ENCODE measurements at regions of chr19 and their contacts with region 1.

Region 1: DNA sequence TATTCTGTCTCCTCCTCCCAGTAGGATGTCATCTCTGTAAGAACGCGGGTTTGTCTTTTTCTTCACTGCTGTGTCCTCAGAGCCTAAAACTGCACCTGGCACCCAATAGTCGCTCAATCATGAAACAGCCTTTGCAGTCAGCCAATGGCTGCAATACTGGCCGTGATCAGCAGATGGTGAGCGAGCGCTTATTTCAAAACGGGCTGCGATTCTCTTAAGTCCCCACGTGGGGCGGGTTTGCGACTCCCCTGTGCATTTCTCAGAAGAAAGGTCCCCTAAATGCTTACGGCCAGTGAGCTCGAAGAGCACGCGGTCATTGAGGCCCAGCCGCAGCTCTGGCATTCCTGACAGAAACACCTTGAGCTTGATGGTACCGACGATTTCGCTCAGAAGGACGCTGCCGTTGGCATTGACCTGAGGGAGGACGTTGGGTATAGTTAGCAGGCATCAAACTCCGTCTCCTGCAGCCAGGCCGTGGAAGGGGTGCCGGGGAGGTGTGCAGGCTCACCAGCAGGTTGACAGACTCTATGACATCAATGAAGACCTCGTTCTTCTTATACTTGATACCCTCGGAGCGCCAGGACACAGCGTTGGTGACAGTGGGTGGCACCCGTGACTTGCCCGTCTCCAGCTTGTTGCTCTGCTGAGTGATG is 6.0 kb downstream of the AP1M2 start:
- DNase-seq: peak; percentile 82
- CTCF ChIP-seq: peak; percentile 99

Region 2: DNA sequence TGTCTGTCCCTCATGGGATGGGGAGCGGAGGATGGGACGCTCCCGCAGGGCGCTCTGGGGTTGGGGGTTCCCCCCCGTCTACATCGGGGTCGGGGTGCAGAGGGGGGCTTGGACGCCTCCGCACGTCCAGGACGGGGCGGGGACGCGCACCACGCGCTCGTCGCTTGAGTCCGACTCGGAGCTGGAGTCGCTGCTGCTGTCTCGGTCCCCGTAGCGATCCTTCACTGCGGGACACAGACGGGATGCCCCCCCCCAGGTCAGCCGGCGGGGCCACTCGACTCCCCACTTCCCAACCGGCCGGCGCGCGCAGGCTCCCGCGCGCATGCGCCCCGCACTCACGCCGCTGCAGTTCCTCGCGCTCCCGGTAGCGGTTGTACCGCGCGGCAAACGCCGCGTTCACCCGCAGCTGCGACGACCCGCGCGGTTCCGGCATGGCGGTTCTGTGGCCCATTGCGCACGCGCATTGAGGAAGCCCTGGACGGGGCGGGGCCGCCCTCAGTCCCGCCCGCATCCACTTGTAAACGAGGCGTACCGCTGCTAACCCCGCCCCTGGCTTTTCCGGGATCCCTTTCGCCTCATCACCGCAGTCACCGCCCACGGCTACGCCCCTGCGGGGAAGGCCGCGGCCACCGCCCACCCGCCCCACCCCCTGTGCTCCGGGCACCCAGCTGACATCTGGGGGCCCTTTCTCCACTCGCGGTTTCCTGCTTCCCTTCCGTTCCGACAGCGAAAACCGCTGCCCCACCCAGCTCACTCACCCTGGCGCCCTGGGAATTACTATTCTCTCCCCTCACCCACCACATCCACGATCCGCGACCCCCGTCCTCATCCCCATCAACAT is 15.3 kb before region 1 on chr19 and contains the start of gene KRI1:
- CTCF ChIA-PET with region 1: interaction called, 46 read pairs
- POLR2A ChIA-PET with region 1: no interaction called
- DNase-seq: peak; percentile 98
- CTCF ChIP-seq: no peak

Region 3: DNA sequence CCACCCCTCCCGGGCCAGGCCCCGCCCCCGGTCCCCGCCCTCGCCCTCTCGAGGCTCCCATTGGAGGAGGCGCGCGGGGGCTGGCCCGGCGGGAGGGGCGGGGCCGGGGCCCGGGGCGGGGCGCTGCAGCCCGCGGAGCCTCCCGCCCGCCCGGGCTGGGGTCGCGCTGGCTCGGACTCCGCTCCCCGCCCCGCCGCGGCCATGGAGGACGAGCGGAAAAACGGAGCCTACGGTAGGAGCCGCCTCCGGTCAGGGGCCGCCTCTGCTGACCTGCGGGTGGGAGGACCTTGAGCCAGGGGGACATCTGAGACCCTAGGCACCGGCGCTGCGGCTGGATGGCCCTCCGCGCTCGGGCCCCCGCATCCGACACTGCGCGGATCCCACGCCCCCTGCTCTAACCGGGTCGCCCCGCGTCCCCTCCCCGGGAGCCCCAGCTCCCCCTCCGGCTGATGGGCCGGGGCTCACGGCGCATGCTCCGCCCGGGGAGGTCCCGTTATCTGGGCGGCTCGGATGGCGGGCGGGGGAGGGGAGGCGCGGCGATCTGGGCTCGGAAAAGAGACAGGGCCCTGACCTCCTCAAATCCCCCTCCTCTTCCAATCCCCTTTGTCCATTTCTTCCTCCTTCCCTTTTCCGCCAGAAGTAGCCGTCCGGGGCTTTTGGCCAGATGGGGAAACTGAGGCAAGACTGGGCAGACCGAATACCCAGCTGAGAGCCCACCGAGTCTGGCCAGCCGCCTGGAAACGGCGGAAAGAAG is 21.4 kb after region 1 on chr19:
- CTCF ChIA-PET with region 1: interaction called, 106 read pairs
- POLR2A ChIA-PET with region 1: no interaction called
- DNase-seq: peak; percentile 98
- CTCF ChIP-seq: no peak

Region 4: DNA sequence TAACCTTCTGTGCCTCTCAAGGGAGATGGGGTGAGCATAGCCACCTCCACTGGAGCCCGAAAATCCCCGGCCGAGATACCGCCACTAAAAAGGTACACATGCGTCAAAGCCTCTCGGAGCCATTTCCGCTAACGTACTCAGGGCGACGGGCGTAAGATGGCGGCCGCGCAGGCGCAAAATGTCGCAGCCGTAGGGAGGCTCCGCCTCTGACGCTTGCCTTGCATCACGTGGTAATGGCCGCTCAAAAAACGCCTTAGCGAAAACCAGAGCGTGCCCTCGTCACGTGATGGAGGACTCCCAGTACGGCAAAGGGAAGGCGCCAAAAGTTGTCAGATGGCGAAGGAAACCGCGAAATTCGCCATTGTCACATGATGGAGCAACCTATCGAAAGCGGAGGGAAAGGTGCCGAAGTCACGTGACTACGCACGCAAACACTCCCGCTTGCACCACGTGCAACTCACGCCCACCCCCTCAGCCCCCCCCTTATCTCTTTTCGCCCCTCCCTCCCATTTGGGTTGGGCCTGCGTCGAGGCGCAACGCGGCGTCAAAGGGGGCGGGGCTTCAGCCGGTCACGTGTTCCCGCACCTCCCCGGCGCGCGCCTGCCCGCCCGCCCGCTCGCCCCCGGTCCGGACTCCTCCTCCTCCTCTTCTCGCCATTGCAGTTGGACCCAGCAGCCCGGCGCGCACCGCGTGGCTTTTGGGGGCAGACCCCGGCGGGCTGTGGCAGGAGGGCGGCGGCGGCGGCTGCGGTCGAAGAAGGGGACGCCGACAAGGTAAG is 72.8 kb after region 1 on chr19 and contains the start of gene ILF3:
- CTCF ChIA-PET with region 1: interaction called, 340 read pairs
- POLR2A ChIA-PET with region 1: no interaction called
- DNase-seq: peak; percentile 97
- CTCF ChIP-seq: no peak

Region 5: GRCh38 chr19:10864538-10864899 is 283.4 kb after region 1 on chr19:
- CTCF ChIA-PET with region 1: interaction called, 12 read pairs
- POLR2A ChIA-PET with region 1: interaction called, 5 read pairs
- DNase-seq: peak; percentile 88
- CTCF ChIP-seq: peak; percentile 93

Measured in GM10248 (cell line).